HEK293T (cell line): ENCODE measurements at regions of chr12 and their contacts with region 1.

Region 1: DNA sequence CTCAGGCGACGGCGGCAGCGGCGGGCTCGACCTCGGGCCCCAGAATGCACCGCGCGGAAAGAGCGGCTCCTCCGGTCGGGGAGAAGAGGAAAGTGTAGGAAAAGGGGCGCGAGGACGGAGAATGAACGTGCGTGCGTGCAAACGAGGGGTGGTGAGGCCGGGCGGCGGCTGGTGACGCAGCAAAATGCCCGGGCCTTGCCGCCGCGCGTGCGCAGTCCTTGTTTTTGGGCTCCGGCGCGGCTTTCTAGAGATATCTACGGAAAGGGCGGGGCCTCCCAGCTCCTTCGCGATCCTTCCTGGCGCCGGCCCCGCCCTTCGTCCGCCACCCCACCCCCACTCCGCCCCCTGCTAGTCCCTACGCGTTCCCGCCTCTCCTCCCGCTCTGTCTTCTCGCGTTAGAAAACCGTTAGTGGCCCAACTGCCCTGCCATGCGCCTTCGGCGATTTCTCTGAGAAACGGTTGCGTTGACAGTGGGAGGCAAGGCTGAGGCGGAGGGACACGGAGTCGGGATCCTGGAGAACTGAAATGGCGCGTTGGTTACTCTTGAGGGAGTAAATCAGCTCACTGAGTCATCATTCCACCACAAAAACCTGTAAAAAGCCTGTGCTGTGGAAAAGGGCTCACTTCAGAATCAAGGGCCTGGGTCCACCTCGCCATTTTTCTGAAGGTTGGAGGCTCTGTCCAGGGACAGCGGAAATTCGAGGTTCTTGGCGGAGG is at the start of gene PTGES3:
- DNase-seq: peak; percentile 94

Region 2: DNA sequence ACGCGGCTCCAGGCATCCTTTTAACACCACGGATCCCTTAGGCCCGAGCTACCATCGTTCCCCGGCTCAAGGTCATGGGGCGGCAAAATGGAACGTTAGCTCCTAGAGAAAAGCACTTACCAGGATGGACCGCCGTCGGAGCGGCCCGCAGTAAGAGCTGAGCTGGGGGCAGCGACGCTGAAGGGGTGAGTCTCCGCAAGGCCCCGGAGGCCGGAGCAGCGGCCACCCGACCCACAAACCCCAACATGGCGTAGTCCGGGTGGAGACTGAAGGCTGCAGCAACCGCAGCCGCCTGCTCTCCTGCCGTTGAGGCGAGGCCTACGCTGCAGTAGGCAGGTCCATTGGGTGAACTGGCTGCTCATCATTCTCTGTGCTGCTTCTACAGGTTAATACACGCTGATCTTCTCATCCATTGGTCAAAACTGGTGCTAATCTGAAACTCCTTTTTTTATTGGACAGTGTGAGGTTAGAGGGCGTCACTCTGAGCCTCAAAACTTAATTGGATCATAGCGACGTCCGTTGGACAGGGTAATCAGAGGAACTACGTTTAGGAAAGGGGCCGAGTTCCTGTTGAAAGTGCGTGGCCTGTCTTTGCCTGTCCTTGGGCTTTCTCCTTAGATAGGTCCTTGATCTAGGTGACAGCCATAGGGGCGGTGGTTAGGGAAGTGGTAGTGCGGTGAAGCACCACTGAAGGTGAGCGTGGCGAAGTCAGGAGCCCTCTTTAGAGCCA is 42.4 kb before region 1 on chr12 and contains the start of gene ATP5F1B:
- CTCF ChIA-PET with region 1: interaction called, 6 read pairs
- POLR2A ChIA-PET with region 1: interaction called, 16 read pairs
- DNase-seq: peak; percentile 96

Region 3: DNA sequence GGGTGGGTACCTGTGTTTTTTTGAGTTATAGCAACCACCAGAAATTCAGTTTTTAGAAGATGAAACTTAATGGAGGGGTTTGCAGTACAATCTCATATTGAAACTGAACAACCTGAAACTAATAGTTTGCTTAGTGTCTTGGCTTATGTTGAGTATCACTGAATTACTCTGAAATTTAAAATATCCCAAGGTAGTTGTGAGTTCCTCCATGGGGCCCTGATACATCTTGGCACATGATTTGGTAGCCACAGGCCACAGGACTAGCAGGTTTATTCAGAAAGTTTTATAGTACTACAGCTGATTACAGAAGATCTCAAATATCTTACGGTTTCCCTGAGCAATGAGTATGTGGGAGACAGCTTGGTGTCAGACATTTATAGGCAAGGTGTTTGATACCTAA is 10.6 kb before region 1 on chr12:
- CTCF ChIA-PET with region 1: no interaction called
- POLR2A ChIA-PET with region 1: interaction called, 39 read pairs
- DNase-seq: no peak

Region 4: DNA sequence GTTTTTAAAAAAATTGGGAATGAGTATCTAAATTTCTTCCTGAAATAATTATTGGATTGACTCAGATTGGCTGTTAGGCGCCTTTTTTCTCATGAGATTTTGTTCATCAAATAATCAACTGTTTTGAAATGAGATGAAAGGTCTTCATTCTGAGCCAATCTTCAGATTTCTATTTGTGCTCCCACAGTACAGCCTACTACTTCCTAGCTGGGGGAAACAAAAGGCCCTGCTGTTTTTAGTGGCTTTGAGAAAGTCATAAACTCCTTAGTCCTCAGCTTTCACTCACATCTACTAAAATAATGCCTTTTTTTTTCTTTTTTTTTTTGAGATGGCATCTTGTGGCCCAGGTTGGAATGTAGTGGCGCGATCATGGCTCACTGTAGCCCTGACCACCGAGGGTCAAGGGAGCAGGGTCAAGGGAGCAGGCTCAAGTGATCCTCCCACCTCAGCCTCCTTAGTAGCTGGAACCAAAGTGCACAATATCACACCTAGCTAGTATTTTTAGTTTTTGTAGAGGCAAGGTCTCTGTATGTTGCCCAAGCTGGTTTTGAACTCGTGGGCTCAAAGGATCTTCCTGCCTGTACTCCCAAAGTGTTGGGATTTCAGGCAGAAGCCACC is 21.6 kb after region 1 on chr12:
- CTCF ChIA-PET with region 1: no interaction called
- POLR2A ChIA-PET with region 1: interaction called, 18 read pairs
- DNase-seq: no peak

Region 5: DNA sequence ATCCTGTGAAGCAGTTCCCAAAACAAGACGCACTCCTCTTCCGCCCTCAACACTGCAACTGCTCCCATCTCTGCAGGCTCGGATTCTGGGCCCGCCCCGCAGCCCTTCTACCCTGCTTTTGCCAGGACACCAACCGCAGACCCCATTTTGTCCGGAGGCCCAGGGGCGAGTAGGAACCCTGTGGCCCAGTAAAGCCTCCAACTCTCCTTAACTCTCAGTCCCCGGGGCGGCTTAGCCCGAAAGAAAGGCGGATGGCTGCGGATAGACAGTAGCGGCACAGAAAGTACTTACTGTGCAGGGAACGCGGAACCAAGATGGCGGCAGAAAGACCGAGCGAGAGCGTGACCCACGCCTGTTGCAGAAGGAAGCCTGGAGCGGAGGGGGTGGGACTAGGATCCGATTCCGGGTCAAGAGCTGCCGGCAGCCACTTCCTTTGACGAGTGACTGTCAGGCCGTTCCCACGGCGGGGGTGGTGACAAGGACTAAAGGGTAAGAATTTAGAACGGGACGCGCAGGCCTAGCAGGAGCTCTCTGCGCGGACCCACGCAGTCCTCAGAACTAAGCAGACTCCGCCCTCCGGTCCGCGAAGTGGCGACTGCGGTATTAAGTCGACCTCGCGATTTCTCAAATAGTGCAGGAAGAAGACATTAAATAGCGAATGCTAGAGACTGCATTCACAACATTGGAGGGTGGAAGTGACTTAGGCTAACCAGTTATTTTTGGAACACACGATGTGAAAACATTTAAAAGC is 36.9 kb after region 1 on chr12 and contains the start of gene NACA:
- CTCF ChIA-PET with region 1: no interaction called
- POLR2A ChIA-PET with region 1: interaction called, 69 read pairs
- DNase-seq: peak; percentile 95